IMR-90 (cell line): ENCODE measurements at regions of chr13 and their contacts with region 1.

Region 1: DNA sequence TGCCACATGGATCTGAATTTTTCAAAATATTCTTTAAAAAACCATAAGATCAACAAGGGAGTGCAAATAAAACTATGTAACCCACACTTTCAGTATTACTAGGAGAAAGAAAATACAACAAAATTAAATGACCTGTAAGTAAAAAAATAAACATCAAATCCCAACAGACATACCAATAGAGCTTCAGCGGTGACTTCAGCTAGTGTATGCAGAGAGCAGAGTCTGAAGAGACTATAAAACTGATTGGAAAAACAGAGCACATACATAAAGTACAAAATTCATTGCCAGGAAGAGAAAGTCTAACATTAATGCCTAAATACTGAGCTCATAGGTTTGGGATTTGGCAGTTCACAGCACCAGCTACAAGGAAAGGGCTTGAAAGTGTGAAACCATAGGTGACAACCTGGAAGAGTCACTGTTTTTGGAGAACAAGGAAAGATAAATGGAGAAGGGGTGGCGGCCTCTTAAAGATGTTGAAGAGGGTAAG is 291.1 kb downstream of the LMO7 start:
- DNase-seq: peak; percentile 8
- ATAC-seq: peak; percentile 75
- H3K4me3 ChIP-seq: no peak overlapping the region
- H3K27ac ChIP-seq: no peak overlapping the region
- H3K4me1 ChIP-seq: peaks cover 3% of the 10 kb centered on the region; the same call in 1 of the 2 replicates
- H3K27me3 ChIP-seq: no peaks in the 10 kb centered on the region
- CTCF ChIP-seq: no peak
- POLR2A ChIP-seq: no peak
- RAD21 ChIP-seq: no peak

Region 2: GRCh38 chr13:76216729-76217128 is 289.5 kb after region 1 on chr13:
- CTCF ChIA-PET with region 1: no interaction called
- POLR2A ChIA-PET with region 1: no interaction called
- dilution Hi-C with region 1: no loop called
- in situ Hi-C with region 1: no loop called
- intact Hi-C with region 1: loop called (anchors 5 kb)
- DNase-seq: no peak
- ATAC-seq: peak; percentile 37; the same call in 1 of the 2 replicates
- H3K4me3 ChIP-seq: no peak overlapping the region
- H3K27ac ChIP-seq: no peak overlapping the region
- H3K4me1 ChIP-seq: peaks cover 2% of the 10 kb centered on the region; the same call in 1 of the 2 replicates
- H3K27me3 ChIP-seq: peaks cover 3% of the 10 kb centered on the region; the same call in 1 of the 2 replicates
- CTCF ChIP-seq: no peak
- POLR2A ChIP-seq: no peak
- RAD21 ChIP-seq: no peak